ENCODE measurements at regions of chr5 and their contacts with region 1.

Region 1: DNA sequence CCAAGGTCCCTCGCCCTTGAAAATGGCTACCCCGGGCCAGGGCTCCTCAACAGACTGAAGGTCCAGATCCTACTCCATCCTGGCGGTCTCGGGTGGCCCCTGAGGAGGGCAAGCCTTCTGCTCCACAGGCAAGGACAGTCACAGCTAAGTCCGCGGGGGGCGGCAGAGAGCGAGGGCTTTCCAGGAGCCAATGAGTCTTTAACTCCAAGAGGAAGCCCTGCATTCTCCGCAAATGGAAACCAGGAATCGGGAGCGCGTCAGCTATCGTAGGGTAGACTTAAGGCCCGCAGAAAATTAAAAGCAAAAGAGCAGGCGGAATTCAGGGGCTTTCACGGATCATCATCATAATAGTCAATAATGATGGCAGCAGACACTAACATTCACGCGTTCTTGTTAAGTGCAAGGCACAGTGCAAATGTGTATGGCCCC is 87.8 kb upstream of the TNFAIP8 start:
- DNase-seq: peak; percentile 24 to 84 (median 47)
- ATAC-seq: peak; percentile 70
- H3K4me3 ChIP-seq: peak overlapping the region; percentile 84
- H3K27ac ChIP-seq: peak overlapping the region; percentile 85
- H3K4me1 ChIP-seq: peaks cover 26% of the 10 kb centered on the region in 2 experiments
- H3K27me3 ChIP-seq: no peaks in the 10 kb centered on the region
- CTCF ChIP-seq: peak; percentile 27 to 39 (median 32); a peak in 3 of 6 replicates
- EP300 ChIP-seq: no peak
- POLR2A ChIP-seq: no peak
- RAD21 ChIP-seq: no peak

Region 2: GRCh38 chr5:119022017-119022745 is 245.8 kb before region 1 on chr5:
- CTCF ChIA-PET with region 1: no interaction called
- POLR2A ChIA-PET with region 1: no interaction called
- in situ Hi-C with region 1: no loop called
- intact Hi-C with region 1: loop called (anchors 5 kb)
- DNase-seq: peak in 2 of 4 experiments; percentile 32 to 40
- ATAC-seq: peak; percentile 87
- H3K4me3 ChIP-seq: no peak overlapping the region
- H3K27ac ChIP-seq: no peak overlapping the region
- H3K4me1 ChIP-seq: no peaks in the 10 kb centered on the region
- H3K27me3 ChIP-seq: no peaks in the 10 kb centered on the region
- CTCF ChIP-seq: peak; percentile 29 to 71 (median 52); a peak in 5 of 6 replicates
- EP300 ChIP-seq: no peak
- POLR2A ChIP-seq: no peak
- RAD21 ChIP-seq: peak; percentile 71 to 88

Region 3: GRCh38 chr5:119322948-119323537 is 55.1 kb after region 1 on chr5:
- CTCF ChIA-PET with region 1: no interaction called
- POLR2A ChIA-PET with region 1: interaction called, 5 read pairs
- in situ Hi-C with region 1: no loop called
- intact Hi-C with region 1: loop called (anchors 5 kb)
- DNase-seq: peak in 2 of 4 experiments; percentile 48 to 60
- ATAC-seq: peak; percentile 42
- H3K4me3 ChIP-seq: peak overlapping the region; percentile 30
- H3K27ac ChIP-seq: peak overlapping the region; percentile 92
- H3K4me1 ChIP-seq: peaks cover 57 to 78% of the 10 kb centered on the region in 2 experiments
- H3K27me3 ChIP-seq: no peaks in the 10 kb centered on the region
- CTCF ChIP-seq: no peak
- EP300 ChIP-seq: peak; percentile 41; the same call in 1 of the 2 replicates
- POLR2A ChIP-seq: no peak
- RAD21 ChIP-seq: peak in 1 of 2 experiments; percentile 16; a peak in 1 of 4 replicates

Region 4: GRCh38 chr5:119332978-119333401 is 65.0 kb after region 1 on chr5:
- CTCF ChIA-PET with region 1: no interaction called
- POLR2A ChIA-PET with region 1: interaction called, 3 read pairs
- in situ Hi-C with region 1: no loop called
- intact Hi-C with region 1: loop called (anchors 2 kb)
- DNase-seq: no peak
- ATAC-seq: no peak
- H3K4me3 ChIP-seq: no peak overlapping the region
- H3K27ac ChIP-seq: peak overlapping the region; percentile 49; the same call in 2 of the 3 replicates
- H3K4me1 ChIP-seq: peaks cover 29 to 90% of the 10 kb centered on the region in 2 experiments; a peak in 4 of 5 replicates
- H3K27me3 ChIP-seq: no peaks in the 10 kb centered on the region
- CTCF ChIP-seq: no peak
- EP300 ChIP-seq: no peak
- POLR2A ChIP-seq: no peak
- RAD21 ChIP-seq: no peak

Region 5: GRCh38 chr5:119355685-119356611 is 88.0 kb after region 1 on chr5 and contains the start of gene TNFAIP8:
- CTCF ChIA-PET with region 1: no interaction called
- POLR2A ChIA-PET with region 1: no interaction called
- in situ Hi-C with region 1: no loop called
- intact Hi-C with region 1: no loop called
- DNase-seq: peak in 1 of 4 experiments; percentile 20
- ATAC-seq: no peak
- H3K4me3 ChIP-seq: no peak within 1 kb of the TSS
- H3K27ac ChIP-seq: no peak within 1 kb of the TSS
- H3K4me1 ChIP-seq: peaks cover 0 to 42% of the 10 kb centered on the region in 2 experiments; a peak in 4 of 5 replicates
- H3K27me3 ChIP-seq: no peaks in the 10 kb centered on the region
- CTCF ChIP-seq: no peak
- EP300 ChIP-seq: no peak
- POLR2A ChIP-seq: no peak
- RAD21 ChIP-seq: no peak
- polyA plus RNA-seq, gene TNFAIP8: 29.9 to 34.3 TPM

Region 6: DNA sequence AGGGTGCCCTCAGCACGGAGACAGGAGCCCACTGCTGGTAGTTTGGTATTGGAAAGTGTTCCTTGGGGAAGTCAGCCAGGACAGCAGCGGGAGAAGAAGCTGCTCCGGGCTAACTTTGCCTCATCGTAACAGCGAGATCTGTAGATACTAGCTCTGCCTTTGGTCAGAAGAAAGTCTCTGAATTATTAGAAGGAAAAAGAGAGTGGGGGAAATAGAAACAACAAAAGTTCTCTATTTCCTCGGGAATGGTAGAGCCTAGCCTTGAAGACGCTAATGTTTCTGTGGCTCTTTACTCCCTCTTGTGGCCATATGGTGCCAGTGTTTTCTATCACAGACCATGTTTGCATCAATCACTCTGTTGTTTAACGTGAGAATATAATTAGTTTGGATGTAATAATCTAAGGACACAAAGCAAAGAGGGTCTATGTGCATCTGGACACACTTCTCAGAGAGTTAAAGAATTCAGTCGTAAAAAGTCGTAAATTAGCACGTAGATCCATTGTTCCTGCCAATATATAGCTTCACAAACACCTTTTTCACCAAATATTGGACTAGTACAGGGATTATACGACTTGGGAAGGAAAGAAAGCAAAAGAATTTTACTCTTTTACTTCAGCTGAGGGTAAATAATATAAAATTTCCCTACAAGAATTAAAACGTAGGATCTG is 144.1 kb after region 1 on chr5:
- CTCF ChIA-PET with region 1: no interaction called
- POLR2A ChIA-PET with region 1: no interaction called
- in situ Hi-C with region 1: no loop called
- intact Hi-C with region 1: loop called (anchors 2 kb)
- DNase-seq: peak; percentile 69 to 84 (median 72)
- ATAC-seq: peak; percentile 96
- H3K4me3 ChIP-seq: peak overlapping the region; percentile 6
- H3K27ac ChIP-seq: peak overlapping the region; percentile 27; the same call in 1 of the 3 replicates
- H3K4me1 ChIP-seq: peaks cover 0 to 10% of the 10 kb centered on the region in 2 experiments; a peak in 3 of 5 replicates
- H3K27me3 ChIP-seq: no peaks in the 10 kb centered on the region
- CTCF ChIP-seq: peak; percentile 78 to 94 (median 87)
- EP300 ChIP-seq: no peak
- POLR2A ChIP-seq: no peak
- RAD21 ChIP-seq: peak; percentile 96 to 97